Activated naive CD4-positive, alpha-beta T cell treated with anti-CD3 and anti-CD28 coated beads for 36 hours (primary cell): ENCODE measurements at regions of chr4 and their contacts with region 1.

Region 1: DNA sequence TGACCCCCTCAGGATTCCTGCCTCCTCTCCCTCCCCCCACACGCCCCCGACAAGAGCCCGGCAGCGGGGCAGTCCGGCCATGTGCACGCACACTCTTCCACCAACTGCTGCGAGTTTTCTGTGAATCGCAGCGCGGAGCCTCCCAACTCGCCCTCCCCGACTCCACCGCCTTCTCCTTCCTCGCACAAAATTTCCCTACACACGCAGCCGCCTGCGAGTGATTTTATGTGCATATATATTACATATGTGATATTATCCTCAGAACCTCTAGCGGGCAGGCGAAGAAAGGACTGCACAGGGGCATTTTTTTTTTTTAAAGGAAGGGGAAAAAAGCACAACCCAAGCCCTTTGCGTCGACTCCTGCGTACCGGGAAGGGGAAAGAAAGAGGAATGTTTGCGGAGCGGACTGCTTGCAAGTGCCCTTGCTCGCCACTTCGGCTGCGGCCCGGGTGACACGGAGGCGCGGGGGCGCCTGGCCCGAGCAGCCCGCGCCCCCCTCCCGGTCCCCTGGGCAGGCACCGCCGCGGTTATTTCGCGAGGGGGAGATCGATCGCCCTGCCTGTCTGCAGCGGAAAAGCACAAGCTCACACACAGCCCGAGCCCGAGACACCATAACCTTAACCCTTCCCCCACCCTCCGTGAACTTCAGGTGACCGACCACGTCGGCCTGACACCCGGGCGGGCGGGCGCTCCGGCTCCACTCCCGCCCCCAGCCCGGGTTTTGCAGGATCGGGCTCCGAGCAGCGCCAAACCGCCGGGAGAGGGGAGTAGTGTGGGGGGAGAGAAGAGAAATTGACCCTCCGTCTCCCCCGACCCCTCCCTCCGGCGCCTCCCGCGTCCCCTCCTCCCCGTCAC is 2.3 kb downstream of the ZNF827 start:
- DNase-seq: peak; percentile 65
- H3K4me3 Mint-ChIP-seq: peak overlapping the region; percentile 100
- H3K27ac Mint-ChIP-seq: peak overlapping the region; percentile 89
- H3K4me1 Mint-ChIP-seq: peaks cover 51% of the 10 kb centered on the region
- H3K27me3 Mint-ChIP-seq: no peaks in the 10 kb centered on the region

Region 2: GRCh38 chr4:145180298-145181090 is 755.9 kb before region 1 on chr4 and contains the start of gene OTUD4:
- CTCF ChIA-PET with region 1: no interaction called
- intact Hi-C with region 1: loop called (anchors 1 kb)
- DNase-seq: peak; percentile 96
- H3K4me3 Mint-ChIP-seq: peak within 1 kb of the TSS; percentile 93
- H3K27ac Mint-ChIP-seq: peak within 1 kb of the TSS; percentile 98
- H3K4me1 Mint-ChIP-seq: peaks cover 29% of the 10 kb centered on the region
- H3K27me3 Mint-ChIP-seq: no peaks in the 10 kb centered on the region
- total RNA-seq, gene OTUD4: 35.9 to 37.1 TPM

Region 3: GRCh38 chr4:145618932-145619638 is 317.3 kb before region 1 on chr4 and contains the start of gene MMAA:
- CTCF ChIA-PET with region 1: interaction called, 4 read pairs
- intact Hi-C with region 1: loop called (anchors 1 kb)
- DNase-seq: peak; percentile 95
- H3K4me3 Mint-ChIP-seq: peak within 1 kb of the TSS; percentile 93
- H3K27ac Mint-ChIP-seq: peak within 1 kb of the TSS; percentile 99
- H3K4me1 Mint-ChIP-seq: peaks cover 47% of the 10 kb centered on the region
- H3K27me3 Mint-ChIP-seq: no peaks in the 10 kb centered on the region
- total RNA-seq, gene MMAA: 15.2 to 19.6 TPM

Region 4: DNA sequence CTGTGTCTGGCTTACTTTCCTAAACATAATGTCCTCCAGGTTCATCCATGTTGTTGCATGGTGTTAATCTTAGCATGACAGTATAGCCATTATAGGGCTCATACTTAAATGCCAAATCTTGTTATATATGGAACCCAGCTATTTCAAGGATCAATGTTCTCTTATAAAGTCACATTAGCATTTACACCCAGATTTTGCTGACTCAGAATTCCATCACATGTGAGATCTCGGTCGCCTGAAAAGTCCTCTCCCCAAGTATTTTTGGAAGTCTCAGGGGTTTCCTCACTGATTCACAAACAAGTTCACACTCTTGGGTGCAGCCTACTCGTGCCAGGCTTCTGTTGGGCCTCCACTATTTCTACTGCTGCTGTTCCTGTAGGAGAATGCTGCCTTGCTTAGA is 276.3 kb before region 1 on chr4:
- CTCF ChIA-PET with region 1: no interaction called
- intact Hi-C with region 1: no loop called
- DNase-seq: no peak
- H3K4me3 Mint-ChIP-seq: no peak overlapping the region
- H3K27ac Mint-ChIP-seq: no peak overlapping the region
- H3K4me1 Mint-ChIP-seq: no peaks in the 10 kb centered on the region
- H3K27me3 Mint-ChIP-seq: no peaks in the 10 kb centered on the region

Region 5: GRCh38 chr4:145829629-145830395 is 106.6 kb before region 1 on chr4:
- CTCF ChIA-PET with region 1: no interaction called
- intact Hi-C with region 1: loop called (anchors 2 kb)
- DNase-seq: peak; percentile 33
- H3K4me3 Mint-ChIP-seq: peak overlapping the region; percentile 23
- H3K27ac Mint-ChIP-seq: peak overlapping the region; percentile 13
- H3K4me1 Mint-ChIP-seq: peaks cover 41% of the 10 kb centered on the region
- H3K27me3 Mint-ChIP-seq: no peaks in the 10 kb centered on the region

Region 6: DNA sequence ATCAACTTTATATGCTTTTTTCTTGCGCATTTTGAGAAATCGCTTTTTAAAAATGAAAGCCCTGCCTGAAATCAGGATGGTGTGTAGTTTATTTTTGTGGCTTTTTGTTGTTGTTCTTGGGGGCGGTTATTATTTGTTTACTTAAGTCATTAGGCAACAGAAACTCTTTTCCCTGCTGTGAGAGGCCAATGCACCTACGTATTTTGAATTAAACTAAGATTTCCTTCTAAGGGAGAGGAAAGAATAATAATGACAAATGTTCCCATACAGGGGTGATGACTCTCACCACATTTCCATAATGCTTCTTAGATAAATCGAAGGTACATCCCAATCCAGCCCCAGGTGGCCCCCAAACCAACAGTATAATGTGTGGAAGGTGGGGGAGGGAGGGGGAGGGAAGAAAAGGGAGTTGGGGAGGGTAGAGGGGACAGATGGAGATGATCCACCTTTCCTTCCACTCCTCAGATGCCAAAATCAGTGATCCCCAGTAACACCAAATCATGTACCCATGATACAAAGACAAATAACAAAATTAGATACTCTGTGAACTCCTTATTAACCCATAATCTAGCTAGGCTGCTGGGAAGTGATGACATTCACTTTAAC is 37.3 kb before region 1 on chr4:
- CTCF ChIA-PET with region 1: no interaction called
- intact Hi-C with region 1: loop called (anchors 2 kb)
- DNase-seq: no peak
- H3K4me3 Mint-ChIP-seq: no peak overlapping the region
- H3K27ac Mint-ChIP-seq: no peak overlapping the region
- H3K4me1 Mint-ChIP-seq: peaks cover 35% of the 10 kb centered on the region
- H3K27me3 Mint-ChIP-seq: no peaks in the 10 kb centered on the region

Region 7: GRCh38 chr4:146458594-146458993 is 522.2 kb after region 1 on chr4:
- CTCF ChIA-PET with region 1: no interaction called
- intact Hi-C with region 1: loop called (anchors 2 kb)
- DNase-seq: peak; percentile 15
- H3K4me3 Mint-ChIP-seq: peak overlapping the region; percentile 63
- H3K27ac Mint-ChIP-seq: peak overlapping the region; percentile 91
- H3K4me1 Mint-ChIP-seq: peaks cover 32% of the 10 kb centered on the region
- H3K27me3 Mint-ChIP-seq: no peaks in the 10 kb centered on the region

Region 8: DNA sequence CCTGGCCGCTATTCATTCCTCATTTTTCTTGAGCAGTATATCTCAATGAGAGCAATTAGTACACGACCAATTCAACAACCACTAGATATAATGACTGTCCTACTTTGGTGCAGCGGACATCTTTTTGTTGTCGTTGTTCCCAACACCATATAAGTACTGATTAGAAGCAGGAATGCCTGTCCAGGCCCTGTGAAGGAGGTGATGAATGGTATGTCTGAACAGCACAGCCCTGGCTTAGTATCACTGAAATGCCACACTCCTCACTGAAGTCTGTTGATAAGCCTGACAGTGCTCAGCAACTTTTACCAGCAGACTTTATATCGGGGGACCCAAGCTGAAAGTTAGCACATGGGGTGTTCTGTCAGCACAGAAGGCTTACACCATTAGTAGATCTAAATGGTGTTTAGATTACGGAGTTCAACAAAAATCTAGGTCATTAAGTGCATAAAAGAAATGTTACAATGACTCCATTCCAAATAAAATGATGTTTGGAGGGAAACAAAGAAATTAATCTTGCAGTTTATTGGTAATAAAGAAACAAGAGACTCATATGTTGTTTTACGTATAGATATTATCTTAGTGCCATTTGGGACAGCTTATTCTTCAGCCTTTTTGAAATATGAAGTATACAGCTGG is 1237.5 kb after region 1 on chr4:
- CTCF ChIA-PET with region 1: no interaction called
- intact Hi-C with region 1: no loop called
- DNase-seq: no peak
- H3K4me3 Mint-ChIP-seq: no peak overlapping the region
- H3K27ac Mint-ChIP-seq: no peak overlapping the region
- H3K4me1 Mint-ChIP-seq: no peaks in the 10 kb centered on the region
- H3K27me3 Mint-ChIP-seq: peaks cover 8% of the 10 kb centered on the region